B cell (primary cell): ENCODE measurements at regions of chr16 and their contacts with region 1.

Region 1: DNA sequence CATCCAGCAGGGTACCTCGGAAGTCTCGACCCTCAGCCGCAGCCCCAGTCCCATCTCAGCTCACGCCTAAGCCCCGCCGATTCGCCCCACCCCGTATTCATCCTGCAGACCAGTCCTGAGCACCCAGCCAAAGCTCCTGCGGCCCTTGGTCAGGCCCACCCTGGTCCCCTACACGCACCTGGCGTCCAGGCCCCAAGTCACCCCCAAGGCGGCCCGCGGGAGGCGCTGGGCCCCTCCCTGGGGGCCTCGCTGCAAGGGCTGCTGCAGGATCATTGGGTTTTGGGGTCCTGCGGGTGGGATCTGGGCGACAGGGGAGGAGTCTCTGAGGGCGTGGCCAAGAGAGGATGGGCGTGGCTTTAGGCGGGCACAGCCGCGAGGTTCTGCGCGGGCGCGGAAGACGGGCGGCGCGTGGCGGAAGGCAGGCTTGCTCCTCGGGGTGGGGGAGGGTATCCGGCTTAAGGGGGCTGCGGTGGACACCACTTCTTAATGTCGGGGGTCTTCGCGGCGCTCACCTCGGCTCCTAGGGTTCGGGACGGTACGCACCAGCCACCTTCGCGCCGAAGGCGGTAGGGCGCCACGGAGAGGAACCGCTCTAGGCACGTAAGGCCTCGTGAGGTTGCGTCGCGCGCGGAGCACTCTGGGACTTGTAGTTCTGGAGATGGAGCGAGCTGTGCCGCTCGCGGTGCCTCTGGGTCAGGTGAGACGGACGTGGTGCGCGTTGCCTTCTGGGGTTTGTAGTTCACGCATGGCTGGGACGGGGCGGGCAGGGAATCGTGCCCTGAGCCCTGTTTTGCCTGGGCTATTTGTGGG is at the starts of genes HCFC1R1 and THOC6:
- DNase-seq: peak; percentile 99
- ATAC-seq: peak; percentile 76
- H3K4me3 ChIP-seq: peak within 1 kb of the TSS; percentile 43 to 79 (median 71)
- H3K4me3 Mint-ChIP-seq: peak within 1 kb of the TSS; percentile 97
- H3K27ac ChIP-seq: peak within 1 kb of the TSS; percentile 83 to 94
- H3K27ac Mint-ChIP-seq: peak within 1 kb of the TSS; percentile 99
- H3K4me1 ChIP-seq: peaks cover 44 to 60% of the 10 kb centered on the region in 2 donors
- H3K4me1 Mint-ChIP-seq: peaks cover 47% of the 10 kb centered on the region
- H3K27me3 ChIP-seq: peaks cover 0 to 5% (median 2%) of the 10 kb centered on the region in 4 experiments
- H3K27me3 Mint-ChIP-seq: peaks cover 1% of the 10 kb centered on the region
- CTCF ChIP-seq: no peak
- total RNA-seq, gene HCFC1R1: 17.9 and 19.1 TPM in 2 replicates
- total RNA-seq, gene THOC6: 25.3 and 28.5 TPM in 2 replicates

Region 2: DNA sequence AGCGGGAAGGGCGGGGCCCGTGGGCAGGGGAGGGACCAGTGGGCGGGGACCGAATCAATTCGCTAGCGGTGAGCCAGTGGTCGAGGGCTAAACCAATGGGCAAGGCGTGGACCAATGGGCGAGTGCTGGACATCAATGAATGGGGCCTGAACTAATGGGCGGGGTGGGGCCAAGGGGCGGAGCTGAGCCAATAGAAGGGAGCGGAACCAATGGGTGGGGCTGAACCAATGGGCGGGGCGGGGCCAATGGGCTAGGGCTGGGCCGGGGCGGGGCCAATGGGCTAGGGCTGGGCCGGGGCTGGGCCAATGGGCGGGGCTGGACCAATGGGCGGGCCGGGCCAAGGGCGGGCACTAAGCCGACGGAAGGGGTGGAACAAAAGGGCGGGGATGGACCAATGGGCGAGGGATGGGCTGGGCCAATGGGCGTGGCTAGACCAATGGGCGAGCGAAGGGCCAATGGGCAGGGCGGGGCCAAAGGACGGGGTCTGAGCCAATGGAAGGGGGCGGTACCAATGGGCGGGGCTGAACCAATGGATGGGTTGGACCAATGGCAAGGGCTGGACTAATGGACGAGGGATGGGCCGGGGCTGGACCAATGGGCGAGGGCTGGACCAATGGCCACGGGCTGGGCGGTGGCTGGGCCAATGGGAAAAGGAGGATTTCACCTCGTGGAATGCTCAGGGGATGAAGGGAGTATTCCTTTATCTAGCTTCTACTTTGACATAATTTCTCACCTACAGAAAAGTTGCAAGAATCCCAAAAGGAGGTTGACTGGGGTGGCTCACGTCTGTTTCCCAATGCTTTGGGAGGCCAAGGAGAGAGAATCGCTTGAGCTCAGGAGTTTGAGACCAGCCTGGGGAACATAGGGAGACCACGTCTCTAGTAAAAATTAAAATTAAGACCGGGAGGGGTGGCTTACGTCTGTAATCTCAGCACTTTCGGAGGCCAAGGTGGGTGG is 118.2 kb before region 1 on chr16:
- CTCF ChIA-PET with region 1: no interaction called
- POLR2A ChIA-PET with region 1: no interaction called
- intact Hi-C with region 1: loop called (anchors 1 kb)
- DNase-seq: peak; percentile 95
- ATAC-seq: peak; percentile 75
- H3K4me3 ChIP-seq: peak overlapping the region; percentile 21 to 85 (median 74)
- H3K4me3 Mint-ChIP-seq: peak overlapping the region; percentile 93
- H3K27ac ChIP-seq: peak overlapping the region in 1 of 2 donors; percentile 22
- H3K27ac Mint-ChIP-seq: peak overlapping the region; percentile 84
- H3K4me1 ChIP-seq: peaks cover 10 to 28% of the 10 kb centered on the region in 2 donors
- H3K4me1 Mint-ChIP-seq: peaks cover 33% of the 10 kb centered on the region
- H3K27me3 ChIP-seq: no peaks in the 10 kb centered on the region
- H3K27me3 Mint-ChIP-seq: no peaks in the 10 kb centered on the region
- CTCF ChIP-seq: no peak

Region 3: GRCh38 chr16:2990891-2991290 is 33.0 kb before region 1 on chr16:
- CTCF ChIA-PET with region 1: no interaction called
- POLR2A ChIA-PET with region 1: no interaction called
- intact Hi-C with region 1: no loop called
- DNase-seq: no peak
- ATAC-seq: no peak
- H3K4me3 ChIP-seq: no peak overlapping the region
- H3K4me3 Mint-ChIP-seq: no peak overlapping the region
- H3K27ac ChIP-seq: no peak overlapping the region
- H3K27ac Mint-ChIP-seq: no peak overlapping the region
- H3K4me1 ChIP-seq: no peaks in the 10 kb centered on the region
- H3K4me1 Mint-ChIP-seq: no peaks in the 10 kb centered on the region
- H3K27me3 ChIP-seq: peaks cover 0 to 4% (median 0%) of the 10 kb centered on the region in 4 experiments
- H3K27me3 Mint-ChIP-seq: no peaks in the 10 kb centered on the region
- CTCF ChIP-seq: no peak

Region 4: GRCh38 chr16:3003582-3004302 is 20.1 kb before region 1 on chr16:
- CTCF ChIA-PET with region 1: interaction called, 213 read pairs
- POLR2A ChIA-PET with region 1: interaction called, 10 read pairs
- intact Hi-C with region 1: loop called (anchors 1 kb)
- DNase-seq: peak; percentile 99
- ATAC-seq: peak; percentile 97
- H3K4me3 ChIP-seq: no peak overlapping the region
- H3K4me3 Mint-ChIP-seq: peak overlapping the region; percentile 85
- H3K27ac ChIP-seq: no peak overlapping the region
- H3K27ac Mint-ChIP-seq: peak overlapping the region; percentile 89
- H3K4me1 ChIP-seq: peaks cover 25 to 31% of the 10 kb centered on the region in 2 donors
- H3K4me1 Mint-ChIP-seq: peaks cover 25% of the 10 kb centered on the region
- H3K27me3 ChIP-seq: peaks cover 0 to 9% (median 4%) of the 10 kb centered on the region in 4 experiments
- H3K27me3 Mint-ChIP-seq: peaks cover 9% of the 10 kb centered on the region
- CTCF ChIP-seq: peak; percentile 57

Region 5: GRCh38 chr16:3059000-3059722 is 35.3 kb after region 1 on chr16:
- CTCF ChIA-PET with region 1: interaction called, 6 read pairs
- POLR2A ChIA-PET with region 1: interaction called, 3 read pairs
- intact Hi-C with region 1: loop called (anchors 1 kb)
- DNase-seq: peak; percentile 90
- ATAC-seq: peak; percentile 97
- H3K4me3 ChIP-seq: peak overlapping the region in 4 of 5 experiments; percentile 75 to 93 (median 82)
- H3K4me3 Mint-ChIP-seq: peak overlapping the region; percentile 87
- H3K27ac ChIP-seq: peak overlapping the region; percentile 38 to 74
- H3K27ac Mint-ChIP-seq: peak overlapping the region; percentile 65
- H3K4me1 ChIP-seq: peaks cover 20 to 22% of the 10 kb centered on the region in 2 donors
- H3K4me1 Mint-ChIP-seq: peaks cover 20% of the 10 kb centered on the region
- H3K27me3 ChIP-seq: peaks cover 0 to 6% (median 0%) of the 10 kb centered on the region in 4 experiments
- H3K27me3 Mint-ChIP-seq: no peaks in the 10 kb centered on the region
- CTCF ChIP-seq: peak; percentile 94

Region 6: DNA sequence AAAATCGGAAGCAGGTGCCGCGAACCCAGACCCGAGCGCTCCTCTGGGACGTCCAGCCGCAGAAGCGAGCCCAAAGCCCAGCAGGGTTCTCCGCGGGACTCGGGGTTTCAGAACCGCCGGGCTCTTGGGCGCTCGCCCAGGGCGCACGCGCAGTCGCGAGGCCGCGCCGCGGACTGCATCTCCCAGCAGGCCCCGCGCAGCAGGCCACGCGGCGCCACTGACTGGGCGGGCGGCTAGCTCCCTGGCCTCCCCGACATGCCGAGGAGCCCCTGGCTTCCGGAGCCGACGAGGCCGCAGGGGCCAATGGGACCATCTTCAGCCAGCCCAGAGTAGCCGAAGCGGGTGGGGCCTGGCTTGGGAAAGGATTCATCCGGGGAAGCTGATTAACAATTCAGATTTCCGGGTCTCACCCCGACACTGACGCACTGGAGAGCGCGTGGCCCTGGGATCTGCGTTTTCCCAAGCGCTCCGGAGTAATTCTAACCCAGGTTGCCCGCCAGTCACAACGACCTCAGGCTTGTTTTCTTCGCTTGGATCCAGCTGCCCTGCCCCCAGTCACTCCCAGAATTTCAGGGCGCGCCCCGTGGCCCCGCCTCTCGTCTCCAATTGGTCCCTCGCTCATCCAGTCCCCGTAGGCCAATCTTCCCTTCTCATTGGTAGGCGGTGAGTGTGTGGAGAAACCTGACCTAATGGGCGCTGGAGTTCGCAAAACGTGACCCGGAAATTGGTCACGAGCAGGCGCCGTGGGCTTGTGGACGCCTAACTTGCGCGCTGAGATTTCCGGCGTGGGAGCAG is 259.1 kb after region 1 on chr16 and contains the start of gene ZNF263:
- CTCF ChIA-PET with region 1: no interaction called
- POLR2A ChIA-PET with region 1: no interaction called
- intact Hi-C with region 1: loop called (anchors 10 kb)
- DNase-seq: peak; percentile 96
- ATAC-seq: peak; percentile 89
- H3K4me3 ChIP-seq: peak within 1 kb of the TSS; percentile 78 to 100 (median 95)
- H3K4me3 Mint-ChIP-seq: peak within 1 kb of the TSS; percentile 97
- H3K27ac ChIP-seq: peak within 1 kb of the TSS; percentile 97 to 99
- H3K27ac Mint-ChIP-seq: peak within 1 kb of the TSS; percentile 98
- H3K4me1 ChIP-seq: peaks cover 22 to 30% of the 10 kb centered on the region in 2 donors
- H3K4me1 Mint-ChIP-seq: peaks cover 37% of the 10 kb centered on the region
- H3K27me3 ChIP-seq: no peaks in the 10 kb centered on the region
- H3K27me3 Mint-ChIP-seq: no peaks in the 10 kb centered on the region
- CTCF ChIP-seq: no peak
- total RNA-seq, gene ZNF263: 43.0 and 46.0 TPM in 2 replicates